ENCODE measurements at regions of chr2 and their contacts with region 1.

Region 1: GRCh38 chr2:66016618-66017017 is 418.3 kb upstream of the MEIS1 start:
- DNase-seq: no peak
- H3K4me3 ChIP-seq: no peak overlapping the region
- CTCF ChIP-seq: no peak

Region 2: GRCh38 chr2:65980531-65980930 is 36.1 kb before region 1 on chr2:
- in situ Hi-C with region 1: loop called (anchors 5 kb)
- DNase-seq: no peak
- H3K4me3 ChIP-seq: no peak overlapping the region
- CTCF ChIP-seq: no peak

Region 3: DNA sequence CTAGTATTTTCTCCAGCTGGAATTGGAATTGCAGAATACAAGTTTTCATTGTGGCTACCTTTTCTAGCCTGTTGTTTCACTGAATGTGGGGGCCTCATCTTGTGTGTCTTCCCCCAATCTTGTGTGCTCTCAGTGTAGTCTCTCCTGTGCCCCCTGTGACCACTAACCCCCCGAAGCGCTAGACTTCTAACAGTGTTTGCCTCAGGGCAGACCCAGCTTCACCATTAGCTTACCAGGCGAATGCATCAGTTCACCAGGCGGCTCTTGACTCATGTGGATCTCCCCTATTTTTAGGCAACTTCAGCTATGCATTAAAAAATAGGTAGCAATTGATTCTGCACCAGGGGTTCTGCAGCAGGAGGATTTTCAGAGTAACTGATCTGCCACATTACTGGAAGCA is 42.1 kb after region 1 on chr2:
- in situ Hi-C with region 1: no loop called
- DNase-seq: no peak
- H3K4me3 ChIP-seq: no peak overlapping the region
- CTCF ChIP-seq: no peak

Measured in astrocyte of the cerebellum (primary cell).